HCT116 (cell line): ENCODE measurements at regions of chr4 and their contacts with region 1.

Region 1: DNA sequence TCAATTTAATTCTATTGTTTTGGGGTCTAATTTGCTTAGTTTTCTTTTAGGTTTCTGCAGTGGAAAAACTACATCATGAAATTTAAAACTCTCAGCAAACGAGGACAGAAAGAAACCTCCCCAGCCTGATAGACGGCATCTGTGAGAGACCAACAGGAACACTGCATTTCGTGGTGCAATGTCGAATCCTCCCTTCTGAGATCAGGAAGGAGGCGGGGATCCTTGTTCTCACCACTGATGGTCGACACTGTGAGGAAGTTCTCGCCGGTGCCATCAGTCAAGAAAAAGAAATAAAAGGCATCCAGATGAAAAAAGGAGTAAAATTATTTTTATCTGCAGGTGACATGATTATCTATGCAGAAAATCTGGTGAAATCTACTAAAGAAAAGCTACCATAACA is 16.5 kb downstream of the GAK start:
- DNase-seq: no peak
- ATAC-seq: no peak
- H3K4me3 ChIP-seq: no peak overlapping the region
- H3K27ac ChIP-seq: no peak overlapping the region
- H3K4me1 ChIP-seq: no peaks in the 10 kb centered on the region
- H3K27me3 ChIP-seq: no peaks in the 10 kb centered on the region
- CTCF ChIP-seq: no peak
- POLR2A ChIP-seq: no peak
- RAD21 ChIP-seq: no peak

Region 2: DNA sequence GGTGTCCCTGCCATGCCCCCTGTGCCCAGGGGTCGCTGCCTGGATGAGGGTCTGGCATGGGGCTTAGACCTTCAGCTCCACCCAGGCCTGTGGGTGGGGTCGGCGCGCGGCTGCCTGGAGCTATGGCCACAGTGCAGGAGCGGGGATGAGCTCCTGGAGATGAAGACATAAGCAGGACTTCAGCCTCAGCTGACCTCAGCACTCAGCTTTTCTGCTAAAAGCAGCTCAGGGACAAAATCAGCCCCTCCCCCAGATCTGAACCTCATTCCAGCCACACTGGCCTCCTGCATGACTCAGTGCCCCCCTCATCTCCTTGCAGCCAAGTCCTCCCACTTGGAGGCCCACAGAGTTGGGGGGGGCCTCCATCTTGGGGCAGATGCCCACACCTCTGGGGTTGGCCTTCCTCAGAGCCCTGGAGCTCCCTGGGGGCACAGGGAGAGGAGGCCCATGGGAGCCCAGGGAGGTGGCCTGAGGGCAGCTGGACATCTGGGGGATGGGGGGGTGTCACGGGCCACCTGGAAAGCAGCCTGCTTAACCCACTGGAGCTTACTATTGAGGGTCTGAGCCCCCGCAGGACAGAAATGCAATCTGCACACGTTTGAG is 70.3 kb before region 1 on chr4:
- CTCF ChIA-PET with region 1: no interaction called
- POLR2A ChIA-PET with region 1: no interaction called
- RAD21 ChIA-PET with region 1: no interaction called
- intact Hi-C with region 1: loop called (anchors 10 kb)
- DNase-seq: no peak
- ATAC-seq: 0 out of 2 replicates have a peak, but pooled peaks have one; percentile 16
- H3K4me3 ChIP-seq: no peak overlapping the region
- H3K27ac ChIP-seq: no peak overlapping the region
- H3K4me1 ChIP-seq: no peaks in the 10 kb centered on the region
- H3K27me3 ChIP-seq: no peaks in the 10 kb centered on the region
- CTCF ChIP-seq: no peak
- POLR2A ChIP-seq: no peak
- RAD21 ChIP-seq: no peak

Region 3: GRCh38 chr4:1183985-1184773 is 268.6 kb after region 1 on chr4:
- CTCF ChIA-PET with region 1: no interaction called
- POLR2A ChIA-PET with region 1: no interaction called
- RAD21 ChIA-PET with region 1: no interaction called
- intact Hi-C with region 1: no loop called
- DNase-seq: no peak
- ATAC-seq: no peak
- H3K4me3 ChIP-seq: no peak overlapping the region
- H3K27ac ChIP-seq: no peak overlapping the region
- H3K4me1 ChIP-seq: peaks cover 0 to 1% of the 10 kb centered on the region in 2 experiments; a peak in 1 of 4 replicates
- H3K27me3 ChIP-seq: no peaks in the 10 kb centered on the region
- CTCF ChIP-seq: no peak
- POLR2A ChIP-seq: no peak
- RAD21 ChIP-seq: no peak